Head of caudate nucleus (tissue), 42 donors: ENCODE measurements at regions of chr19 and their contacts with region 1.

Region 1: DNA sequence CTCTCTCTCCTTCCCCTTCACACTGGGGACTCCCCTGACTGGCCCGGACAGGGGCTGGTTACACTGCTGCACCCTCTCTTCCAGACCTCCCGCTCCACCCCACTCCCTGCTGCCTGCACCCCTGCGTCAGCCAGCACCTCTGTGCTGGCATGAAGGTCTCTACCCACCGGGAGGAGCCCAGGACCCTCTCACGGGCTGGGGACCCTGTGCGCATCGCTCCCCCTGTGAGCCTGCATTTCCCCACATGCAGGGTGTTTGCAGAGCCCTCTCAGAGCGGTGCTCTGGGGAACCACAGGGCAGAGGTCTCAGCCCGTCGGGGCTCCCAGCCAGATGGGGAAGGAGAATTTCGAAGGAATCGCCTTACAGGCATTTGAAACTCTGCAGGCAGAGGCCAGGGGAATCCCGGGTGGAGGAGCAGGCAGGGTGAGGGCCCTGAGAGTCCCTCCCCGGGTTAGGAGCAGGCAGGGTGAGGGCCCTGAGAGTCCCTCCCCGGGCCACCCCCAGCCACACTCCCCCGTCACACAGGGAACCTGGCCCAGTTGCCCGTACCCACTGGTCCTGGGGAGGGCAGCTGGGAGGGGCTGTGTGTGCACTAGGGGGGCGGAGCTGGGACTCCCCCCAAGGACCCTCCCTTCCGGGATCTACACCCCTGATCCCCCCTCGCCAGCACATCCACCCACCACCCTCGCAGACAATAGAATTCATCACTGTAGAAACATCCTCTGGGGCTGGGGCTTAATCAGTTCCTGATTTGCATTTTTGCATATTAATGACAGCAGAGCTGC is 16.3 kb upstream of the TCF3 start:
- DNase-seq: peak in 1 of 42 donors; percentile 11

Region 2: GRCh38 chr19:1551068-1552040 is 117.3 kb before region 1 on chr19:
- intact Hi-C with region 1: loop called (anchors 5 kb)
- DNase-seq: no peak

Region 3: DNA sequence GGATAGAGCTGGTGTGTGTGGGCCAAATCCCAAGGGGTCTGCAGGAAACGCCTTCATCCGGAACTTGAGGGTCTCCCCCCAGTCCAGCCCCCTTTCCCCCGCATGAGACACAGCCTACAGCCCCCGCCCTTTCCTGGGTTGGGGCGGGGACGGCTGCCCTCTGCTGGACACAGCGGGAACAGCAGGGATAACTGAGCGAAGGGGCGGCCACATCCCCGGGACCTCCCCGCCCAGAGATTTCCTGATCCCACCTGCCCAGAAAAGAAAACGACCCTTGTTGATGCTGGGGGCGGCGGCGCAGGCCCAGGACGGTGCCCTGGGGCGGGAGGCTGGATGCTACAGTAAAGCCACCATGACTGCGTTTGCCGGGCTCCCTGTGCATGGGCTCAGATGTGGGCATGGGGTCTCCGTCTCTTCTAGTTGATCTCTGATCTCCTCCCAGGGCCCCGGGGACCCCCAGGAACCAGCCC is 98.8 kb after region 1 on chr19:
- intact Hi-C with region 1: no loop called
- DNase-seq: peak in 36 of 42 donors; percentile 5 to 80 (median 47)

Region 4: GRCh38 chr19:1780272-1780958 is 111.7 kb after region 1 on chr19:
- intact Hi-C with region 1: loop called (anchors 10 kb)
- DNase-seq: no peak